ENCODE measurements at regions of chr15 and their contacts with region 1.

Region 1: DNA sequence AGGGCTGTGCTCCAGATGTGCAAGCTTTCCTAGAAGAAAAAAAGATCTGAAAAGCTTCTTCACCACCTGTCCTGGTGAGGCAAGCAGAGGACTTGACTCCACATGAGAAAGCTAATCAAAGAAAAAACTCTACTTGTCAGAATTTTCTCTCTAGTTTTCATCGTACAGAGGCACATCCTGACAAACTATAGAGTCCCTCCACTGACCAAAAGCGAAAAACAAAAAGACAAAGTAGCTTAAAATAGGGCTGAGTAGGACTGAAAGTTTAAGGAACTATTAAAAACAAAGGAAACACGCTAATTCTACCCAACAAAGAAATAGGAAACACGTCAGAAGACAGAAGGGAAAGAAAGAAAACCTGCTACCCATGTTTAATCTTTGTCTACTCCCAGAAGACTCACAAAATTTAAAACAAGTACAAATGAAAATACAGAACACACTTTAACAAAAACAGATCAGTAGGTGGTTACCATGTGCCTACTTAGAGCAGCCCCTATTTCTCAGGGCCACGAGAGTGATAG is 26.5 kb downstream of the NANOGP8 start:
- DNase-seq: peak; percentile 92
- H3K4me3 ChIP-seq: no peak overlapping the region
- H3K27ac ChIP-seq: peak overlapping the region; percentile 88
- H3K4me1 ChIP-seq: peaks cover 37% of the 10 kb centered on the region
- H3K27me3 ChIP-seq: no peaks in the 10 kb centered on the region
- CTCF ChIP-seq: no peak

Region 2: GRCh38 chr15:34987985-34988873 is 70.4 kb before region 1 on chr15 and contains the start of gene ZNF770:
- CTCF ChIA-PET with region 1: no interaction called
- POLR2A ChIA-PET with region 1: no interaction called
- intact Hi-C with region 1: loop called (anchors 5 kb)
- DNase-seq: peak; percentile 82
- H3K4me3 ChIP-seq: peak within 1 kb of the TSS; percentile 81
- H3K27ac ChIP-seq: peak within 1 kb of the TSS; percentile 84
- H3K4me1 ChIP-seq: peaks cover 13% of the 10 kb centered on the region
- H3K27me3 ChIP-seq: no peaks in the 10 kb centered on the region
- CTCF ChIP-seq: no peak
- total RNA-seq, gene ZNF770: 40.6 and 52.1 TPM in 2 replicates